A673 (cell line): ENCODE measurements at regions of chr7 and their contacts with region 1.

Region 1: DNA sequence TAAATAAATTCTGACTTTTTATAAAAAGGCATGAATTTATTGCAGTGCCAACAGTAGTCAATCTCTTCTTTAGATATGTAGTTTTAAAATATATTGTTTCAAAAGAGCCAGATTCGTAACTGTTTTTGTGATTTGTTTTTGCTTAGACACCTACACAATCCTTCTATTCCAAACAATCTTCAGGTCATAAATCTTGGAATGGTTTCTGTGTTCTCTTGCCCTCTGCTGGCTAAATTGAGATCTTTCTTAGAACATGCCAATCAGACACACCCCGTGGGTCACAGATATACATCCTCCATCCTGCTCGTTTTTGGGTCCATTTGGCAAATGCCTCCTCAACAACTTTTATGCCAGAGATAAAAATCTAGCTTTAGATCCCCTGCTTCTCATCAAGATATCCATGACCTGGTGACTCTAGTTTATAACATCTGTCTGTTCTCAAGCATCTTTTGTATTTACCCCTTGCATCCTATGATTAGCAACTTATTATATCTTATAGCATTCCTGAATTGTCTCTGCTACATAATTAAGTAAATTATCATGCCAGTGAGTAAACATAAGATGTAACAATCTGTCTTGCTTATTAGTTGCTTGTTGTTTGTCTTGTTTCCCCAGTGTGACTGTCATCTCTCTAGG is 35.3 kb upstream of the IFRD1 start:
- DNase-seq: peak; percentile 58
- H3K4me3 ChIP-seq: no peak overlapping the region
- H3K27ac ChIP-seq: no peak overlapping the region
- H3K4me1 ChIP-seq: no peaks in the 10 kb centered on the region
- H3K27me3 ChIP-seq: no peaks in the 10 kb centered on the region
- CTCF ChIP-seq: peak; percentile 67

Region 2: DNA sequence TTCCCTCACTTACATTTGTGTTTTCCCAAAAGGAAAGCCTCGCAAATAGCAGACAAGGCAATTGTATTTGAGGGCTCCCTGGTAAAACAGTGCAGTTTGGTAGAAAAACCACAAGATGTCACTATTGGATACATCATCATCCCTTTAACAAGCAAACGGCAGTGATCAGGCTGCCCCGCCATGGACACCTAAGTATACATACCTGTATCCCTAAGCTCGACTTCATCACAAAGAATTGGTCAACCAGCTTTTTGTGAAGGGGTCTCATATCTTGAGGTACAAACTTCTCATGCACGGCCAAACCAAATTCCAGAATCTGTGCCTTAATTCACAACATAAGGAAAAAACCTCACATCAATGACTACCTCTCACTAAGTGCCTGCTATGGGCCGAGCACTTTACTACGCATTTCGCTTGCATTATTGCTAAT is 673.1 kb before region 1 on chr7:
- CTCF ChIA-PET with region 1: no interaction called
- POLR2A ChIA-PET with region 1: no interaction called
- intact Hi-C with region 1: loop called (anchors 2 kb)
- DNase-seq: peak; percentile 71
- H3K4me3 ChIP-seq: no peak overlapping the region
- H3K27ac ChIP-seq: no peak overlapping the region
- H3K4me1 ChIP-seq: no peaks in the 10 kb centered on the region
- H3K27me3 ChIP-seq: no peaks in the 10 kb centered on the region
- CTCF ChIP-seq: peak; percentile 81

Region 3: GRCh38 chr7:111855161-111855856 is 559.7 kb before region 1 on chr7:
- CTCF ChIA-PET with region 1: no interaction called
- POLR2A ChIA-PET with region 1: no interaction called
- intact Hi-C with region 1: loop called (anchors 5 kb)
- DNase-seq: peak; percentile 79
- H3K4me3 ChIP-seq: no peak overlapping the region
- H3K27ac ChIP-seq: no peak overlapping the region
- H3K4me1 ChIP-seq: peaks cover 2% of the 10 kb centered on the region
- H3K27me3 ChIP-seq: no peaks in the 10 kb centered on the region
- CTCF ChIP-seq: peak; percentile 74

Region 4: DNA sequence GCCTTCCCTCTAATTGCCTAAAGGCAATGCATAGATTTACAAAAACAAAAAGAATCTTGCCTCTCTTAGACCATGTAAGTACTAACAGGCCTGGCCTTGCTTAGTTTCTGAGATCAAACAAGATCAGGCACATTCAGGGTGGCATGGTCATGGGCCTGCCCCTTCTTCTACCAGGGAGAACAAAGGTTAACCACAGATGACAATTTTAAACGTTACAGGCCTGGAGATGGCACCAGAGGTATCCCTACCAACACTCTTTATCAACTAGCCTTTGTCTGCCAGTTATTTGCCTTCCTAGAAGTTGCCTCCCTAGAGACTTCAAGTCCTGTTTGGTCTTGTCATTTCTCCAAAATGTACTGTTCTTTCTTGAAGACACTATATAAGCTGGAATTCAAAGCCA is 461.4 kb before region 1 on chr7:
- CTCF ChIA-PET with region 1: interaction called, 5 read pairs
- POLR2A ChIA-PET with region 1: no interaction called
- intact Hi-C with region 1: loop called (anchors 2 kb)
- DNase-seq: peak; percentile 69
- H3K4me3 ChIP-seq: no peak overlapping the region
- H3K27ac ChIP-seq: no peak overlapping the region
- H3K4me1 ChIP-seq: no peaks in the 10 kb centered on the region
- H3K27me3 ChIP-seq: no peaks in the 10 kb centered on the region
- CTCF ChIP-seq: peak; percentile 47

Region 5: DNA sequence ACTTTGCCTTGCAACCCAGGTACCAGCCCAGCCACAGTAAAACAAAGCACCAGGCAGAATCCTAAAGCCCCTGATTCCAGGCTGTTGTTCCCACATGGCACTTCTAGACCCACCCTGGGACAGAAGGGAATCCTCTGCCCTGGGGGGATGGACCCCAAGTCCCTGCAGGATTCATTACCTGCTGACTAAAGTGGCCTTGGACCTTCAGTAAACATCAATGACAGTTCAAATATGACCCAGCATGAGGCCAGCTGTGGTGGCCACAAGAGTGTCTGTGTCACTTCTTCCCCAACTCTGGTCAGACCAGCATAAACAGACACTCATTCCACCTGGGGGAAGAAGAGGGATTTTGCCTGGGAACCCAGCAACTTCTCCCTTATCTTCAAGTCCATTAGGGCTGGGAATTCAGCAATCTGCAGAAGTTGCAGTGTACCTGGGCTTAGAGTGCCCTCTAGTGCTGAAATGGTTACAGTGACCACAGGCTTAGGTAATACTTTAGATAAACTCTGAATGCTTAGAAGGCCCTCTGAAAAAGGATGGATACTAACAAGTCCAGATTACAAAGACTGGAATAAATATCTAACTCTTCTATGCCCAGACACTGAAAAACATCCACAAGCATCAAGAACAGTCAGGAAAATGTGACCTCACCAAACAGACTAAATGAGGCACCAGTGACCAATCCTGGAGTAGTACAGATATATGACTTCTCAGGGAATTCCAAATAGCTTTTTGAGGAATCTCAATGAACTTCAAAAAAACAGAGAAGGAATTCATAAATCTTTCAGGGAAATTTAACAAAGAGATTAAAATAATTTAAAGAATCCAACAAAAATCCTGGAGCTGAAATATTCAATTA is 483.7 kb after region 1 on chr7:
- CTCF ChIA-PET with region 1: no interaction called
- POLR2A ChIA-PET with region 1: no interaction called
- intact Hi-C with region 1: loop called (anchors 5 kb)
- DNase-seq: peak; percentile 81
- H3K4me3 ChIP-seq: no peak overlapping the region
- H3K27ac ChIP-seq: no peak overlapping the region
- H3K4me1 ChIP-seq: no peaks in the 10 kb centered on the region
- H3K27me3 ChIP-seq: no peaks in the 10 kb centered on the region
- CTCF ChIP-seq: peak; percentile 83

Region 6: GRCh38 chr7:114085592-114086501 is 1670.9 kb after region 1 on chr7:
- CTCF ChIA-PET with region 1: no interaction called
- POLR2A ChIA-PET with region 1: no interaction called
- intact Hi-C with region 1: no loop called
- DNase-seq: peak; percentile 73
- H3K4me3 ChIP-seq: peak overlapping the region; percentile 52
- H3K27ac ChIP-seq: no peak overlapping the region
- H3K4me1 ChIP-seq: peaks cover 13% of the 10 kb centered on the region
- H3K27me3 ChIP-seq: peaks cover 99% of the 10 kb centered on the region
- CTCF ChIP-seq: no peak